Right ventricle myocardium inferior (tissue), 1 donor: ENCODE measurements at regions of chr12 and their contacts with region 1.

Region 1: GRCh38 chr12:89529738-89530137 is 3.9 kb upstream of the POC1B start:
- DNase-seq: no peak
- ATAC-seq: no peak

Region 2: DNA sequence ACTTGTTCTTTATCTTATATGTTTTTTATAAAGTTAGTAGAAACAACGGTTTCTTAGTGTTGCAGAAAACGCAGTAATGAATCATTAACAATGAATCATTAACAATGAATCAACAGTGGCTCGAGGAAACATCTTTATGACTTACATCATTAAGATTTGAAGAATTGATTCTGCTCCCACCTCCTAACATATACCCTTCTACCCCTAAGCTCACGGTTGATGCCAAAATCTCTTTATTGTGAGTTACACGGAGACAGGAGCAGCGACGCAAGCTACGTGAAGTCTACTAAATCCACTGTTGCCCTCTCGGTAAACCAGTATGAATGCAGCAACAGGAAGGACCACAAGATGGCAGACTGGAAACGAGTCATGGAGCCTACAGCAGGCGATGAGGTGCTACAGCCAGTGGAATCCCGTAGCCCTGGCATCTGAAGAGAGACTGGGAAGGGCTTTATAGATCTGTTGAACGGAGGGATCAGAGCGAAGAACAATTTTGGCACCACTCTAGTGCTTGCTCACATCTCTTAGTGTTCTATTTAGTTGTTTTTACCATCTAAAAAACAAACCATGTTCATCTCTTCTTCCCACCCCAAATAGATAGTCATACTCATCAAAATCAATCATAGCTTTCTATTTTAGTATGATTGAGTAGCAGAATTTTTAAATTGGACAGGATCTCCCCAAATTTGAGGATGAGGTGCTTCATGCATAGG is 510.2 kb before region 1 on chr12:
- intact Hi-C with region 1: loop called (anchors 1 kb)
- DNase-seq: peak; percentile 67
- ATAC-seq: peak; percentile 91

Region 3: DNA sequence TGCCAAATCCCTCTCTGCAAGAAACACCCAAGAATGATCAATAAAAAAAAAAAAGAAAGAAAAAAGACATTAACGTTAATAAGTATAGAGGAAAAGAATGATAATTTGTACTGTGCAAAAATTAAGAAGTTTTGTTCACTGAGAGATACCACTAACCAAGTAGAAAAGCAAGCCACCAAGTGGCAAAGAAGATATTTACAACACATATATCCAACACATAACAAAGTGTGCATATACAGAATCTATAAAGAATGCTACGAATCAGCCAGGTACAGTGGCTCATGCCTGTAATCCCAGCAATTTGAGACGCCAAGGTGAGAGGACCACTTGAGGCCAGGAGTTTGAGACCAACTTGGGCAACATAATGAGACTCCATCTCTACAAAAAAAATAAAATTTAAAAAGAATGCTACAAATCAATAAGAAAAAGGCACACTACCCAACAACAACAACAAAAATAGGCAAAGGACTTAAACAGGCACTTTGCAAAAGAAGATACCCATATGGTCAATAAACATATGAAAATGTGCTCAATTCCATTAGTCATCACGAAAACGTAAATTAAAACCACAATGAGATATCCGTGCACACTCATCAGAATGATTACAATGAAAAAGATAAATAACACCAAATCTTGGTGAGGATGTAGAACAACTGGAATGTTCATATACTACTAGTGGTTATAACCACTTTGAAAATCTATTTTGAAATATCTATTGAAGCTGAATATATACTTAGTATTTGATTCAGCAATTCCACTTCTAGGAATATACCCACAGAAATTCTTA is 25.0 kb before region 1 on chr12:
- intact Hi-C with region 1: no loop called
- DNase-seq: no peak
- ATAC-seq: no peak